Right cardiac atrium (tissue), 5 donors: ENCODE measurements at regions of chr19 and their contacts with region 1.

Region 1: GRCh38 chr19:2663920-2664571 is 38.4 kb downstream of the GNG7 start:
- DNase-seq: peak; percentile 70 to 90 (median 85)
- ATAC-seq: peak; percentile 91 to 93
- H3K4me3 ChIP-seq: no peak overlapping the region
- H3K27ac ChIP-seq: peak overlapping the region; percentile 56
- H3K4me1 ChIP-seq: no peaks in the 10 kb centered on the region
- H3K27me3 ChIP-seq: no peaks in the 10 kb centered on the region

Region 2: GRCh38 chr19:2461751-2462634 is 202.1 kb before region 1 on chr19:
- intact Hi-C with region 1: no loop called
- DNase-seq: peak; percentile 74 to 87 (median 86)
- ATAC-seq: peak; percentile 76 to 79
- H3K4me3 ChIP-seq: peak overlapping the region; percentile 84
- H3K27ac ChIP-seq: no peak overlapping the region
- H3K4me1 ChIP-seq: no peaks in the 10 kb centered on the region
- H3K27me3 ChIP-seq: no peaks in the 10 kb centered on the region

Region 3: GRCh38 chr19:2588081-2588777 is 75.8 kb before region 1 on chr19:
- intact Hi-C with region 1: no loop called
- DNase-seq: peak; percentile 89 to 92 (median 90)
- ATAC-seq: peak; percentile 91 to 92
- H3K4me3 ChIP-seq: no peak overlapping the region
- H3K27ac ChIP-seq: peak overlapping the region; percentile 66
- H3K4me1 ChIP-seq: peaks cover 7% of the 10 kb centered on the region
- H3K27me3 ChIP-seq: no peaks in the 10 kb centered on the region

Region 4: GRCh38 chr19:2733930-2734588 is 70.0 kb after region 1 on chr19:
- intact Hi-C with region 1: loop called in 1 of 4 experiments (anchors 5 kb)
- DNase-seq: no peak
- ATAC-seq: no peak
- H3K4me3 ChIP-seq: no peak overlapping the region
- H3K27ac ChIP-seq: no peak overlapping the region
- H3K4me1 ChIP-seq: peaks cover under 1% of the 10 kb centered on the region
- H3K27me3 ChIP-seq: no peaks in the 10 kb centered on the region